HEK293 (cell line): ENCODE measurements at regions of chr6 and their contacts with region 1.

Region 1: DNA sequence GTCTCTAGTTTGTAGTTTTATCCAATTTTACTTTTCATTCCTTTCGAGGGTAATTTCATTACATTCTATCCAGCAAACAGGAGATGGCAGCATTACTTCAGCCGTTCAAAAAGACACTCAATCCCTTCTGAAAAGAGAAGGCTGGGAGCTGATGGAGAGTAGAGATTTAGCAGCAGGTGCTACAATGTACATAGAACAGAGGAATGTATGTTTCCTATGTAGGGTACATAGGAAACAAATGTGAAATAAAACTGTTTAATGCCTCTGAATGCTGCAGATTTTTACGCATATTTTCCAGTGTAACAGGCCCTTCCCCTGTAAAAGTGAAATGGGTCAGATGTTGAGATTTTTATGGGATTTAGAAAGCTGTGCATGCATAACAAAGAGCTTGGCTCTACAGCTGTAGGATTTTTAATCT is 16.0 kb downstream of the RPS12 start:
- H3K4me3 ChIP-seq: no peak overlapping the region
- H3K27ac ChIP-seq: no peak overlapping the region
- H3K4me1 ChIP-seq: no peaks in the 10 kb centered on the region
- CTCF ChIP-seq: peak; percentile 46; the same call in 1 of the 2 replicates

Region 2: GRCh38 chr6:132813173-132813856 is 17.0 kb before region 1 on chr6:
- CTCF ChIA-PET with region 1: interaction called, 11 read pairs
- POLR2A ChIA-PET with region 1: no interaction called
- H3K4me3 ChIP-seq: peak overlapping the region; percentile 86
- H3K27ac ChIP-seq: peak overlapping the region; percentile 58; the same call in 1 of the 2 replicates
- H3K4me1 ChIP-seq: peaks cover 8% of the 10 kb centered on the region; the same call in 1 of the 2 replicates
- CTCF ChIP-seq: no peak

Region 3: GRCh38 chr6:132850310-132850709 is 20.0 kb after region 1 on chr6:
- CTCF ChIA-PET with region 1: interaction called, 15 read pairs
- POLR2A ChIA-PET with region 1: no interaction called
- H3K4me3 ChIP-seq: no peak overlapping the region
- H3K27ac ChIP-seq: no peak overlapping the region
- H3K4me1 ChIP-seq: no peaks in the 10 kb centered on the region
- CTCF ChIP-seq: no peak

Region 4: DNA sequence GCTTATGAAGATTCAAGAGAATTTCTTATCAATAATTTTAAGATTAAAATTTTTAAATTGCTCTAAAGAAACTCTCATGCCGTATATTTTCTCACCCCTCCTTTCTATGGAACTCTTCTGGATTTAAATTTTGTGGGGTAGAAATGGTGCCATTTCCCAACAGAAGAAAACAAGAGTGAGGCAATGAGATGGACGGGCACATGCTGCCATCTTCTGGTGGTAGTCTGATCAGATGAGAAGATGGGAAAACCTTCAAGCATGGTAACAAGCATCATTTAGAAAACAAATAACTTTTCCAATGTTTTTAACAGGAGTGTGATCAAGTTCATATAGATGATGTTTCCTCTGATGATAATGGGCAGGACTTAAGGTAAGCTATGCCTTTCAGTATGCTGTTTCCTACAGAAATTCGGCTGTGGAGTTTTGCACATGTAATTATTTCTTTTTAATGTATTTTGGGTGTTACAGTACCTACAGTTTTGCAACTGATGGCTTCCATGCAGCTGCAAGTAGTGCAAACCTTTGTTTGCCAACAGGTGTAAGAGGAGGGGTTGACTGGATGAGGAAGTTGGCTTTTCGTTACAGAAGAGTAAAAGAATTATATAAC is 682.2 kb after region 1 on chr6:
- CTCF ChIA-PET with region 1: interaction called, 14 read pairs
- POLR2A ChIA-PET with region 1: no interaction called
- H3K4me3 ChIP-seq: no peak overlapping the region
- H3K27ac ChIP-seq: no peak overlapping the region
- H3K4me1 ChIP-seq: peaks cover 6% of the 10 kb centered on the region
- CTCF ChIP-seq: peak; percentile 58

Region 5: DNA sequence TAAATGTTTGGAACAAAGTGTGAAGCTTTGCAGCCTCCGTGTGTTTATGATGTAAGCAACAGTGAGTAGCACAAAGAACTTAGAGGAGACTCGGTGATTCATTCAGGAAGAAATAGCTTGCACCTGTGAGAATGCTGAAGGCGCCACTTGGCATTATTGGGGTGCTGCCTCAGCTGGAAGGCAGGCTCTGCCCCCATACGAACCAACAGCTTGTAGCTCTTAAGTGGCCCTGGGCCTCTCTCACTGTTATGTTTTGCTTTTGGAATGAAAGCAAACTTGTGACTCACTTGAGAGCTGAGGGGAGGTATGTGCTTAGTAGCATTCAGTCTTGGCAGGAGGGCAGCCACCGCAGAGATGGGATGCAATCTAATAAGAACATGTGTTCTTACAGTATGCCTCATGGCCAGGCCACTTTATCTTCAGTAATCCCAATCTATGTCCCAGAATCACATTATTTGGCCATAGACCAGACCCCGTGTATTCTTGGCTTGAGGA is 721.6 kb after region 1 on chr6:
- CTCF ChIA-PET with region 1: interaction called, 43 read pairs
- POLR2A ChIA-PET with region 1: interaction called, 3 read pairs
- H3K4me3 ChIP-seq: no peak overlapping the region
- H3K27ac ChIP-seq: no peak overlapping the region
- H3K4me1 ChIP-seq: no peaks in the 10 kb centered on the region
- CTCF ChIP-seq: no peak